Astrocyte of the cerebellum (primary cell): ENCODE measurements at regions of chr11 and their contacts with region 1.

Region 1: DNA sequence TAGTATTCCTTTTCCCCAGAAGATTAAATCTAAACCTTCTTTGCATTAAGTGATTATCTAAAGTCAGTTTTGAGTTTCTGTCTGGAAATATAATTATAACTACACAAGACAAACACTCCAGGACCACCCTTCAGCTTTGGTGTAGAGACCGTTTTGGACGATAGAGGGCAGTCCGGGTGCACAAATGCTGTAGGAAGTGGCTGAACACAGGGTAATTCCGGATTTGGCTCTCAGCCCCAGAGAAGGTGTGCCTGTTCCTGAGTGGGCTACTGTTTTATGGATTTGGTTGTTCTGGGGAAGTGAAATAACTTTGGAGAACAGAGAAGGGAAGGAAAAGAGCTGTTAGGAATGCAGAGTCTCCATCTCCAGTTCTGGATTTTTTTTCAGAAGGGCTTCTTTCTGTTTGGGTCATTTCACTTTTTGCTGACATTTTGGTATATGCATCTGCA is 14.8 kb downstream of the EXT2 start:
- DNase-seq: peak; percentile 16
- H3K4me3 ChIP-seq: no peak overlapping the region
- CTCF ChIP-seq: peak; percentile 95

Region 2: GRCh38 chr11:44538375-44539054 is 428.3 kb after region 1 on chr11:
- in situ Hi-C with region 1: loop called (anchors 25 kb)
- DNase-seq: peak; percentile 31
- H3K4me3 ChIP-seq: no peak overlapping the region
- CTCF ChIP-seq: peak; percentile 93